RWPE1 (cell line): ENCODE measurements at regions of chr19 and their contacts with region 1.

Region 1: GRCh38 chr19:53182202-53182905 is 10.8 kb downstream of the ZNF665 start:
- DNase-seq: no peak
- H3K27ac ChIP-seq: no peak overlapping the region
- CTCF ChIP-seq: no peak

Region 2: DNA sequence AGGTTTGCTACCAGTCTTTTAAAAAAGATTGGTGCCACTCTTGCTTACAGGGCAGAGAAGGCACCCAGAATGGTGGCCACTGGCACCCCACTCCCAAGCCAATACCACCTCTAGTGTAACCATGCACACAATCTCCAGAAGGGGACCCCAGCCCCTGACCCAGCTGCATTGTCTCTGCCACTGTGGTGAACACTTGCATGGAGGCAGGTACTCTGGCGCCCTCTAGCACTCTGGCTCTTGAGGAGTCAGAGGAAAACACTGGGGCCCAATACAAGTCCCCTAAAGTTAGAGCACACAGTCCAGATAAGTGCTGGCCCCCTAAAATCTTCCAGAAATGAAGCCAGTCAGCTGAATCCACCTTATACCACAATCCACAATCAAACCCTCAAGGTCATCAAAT is 162.7 kb before region 1 on chr19:
- CTCF ChIA-PET with region 1: no interaction called
- POLR2A ChIA-PET with region 1: no interaction called
- DNase-seq: no peak
- H3K27ac ChIP-seq: no peak overlapping the region
- CTCF ChIP-seq: no peak

Region 3: DNA sequence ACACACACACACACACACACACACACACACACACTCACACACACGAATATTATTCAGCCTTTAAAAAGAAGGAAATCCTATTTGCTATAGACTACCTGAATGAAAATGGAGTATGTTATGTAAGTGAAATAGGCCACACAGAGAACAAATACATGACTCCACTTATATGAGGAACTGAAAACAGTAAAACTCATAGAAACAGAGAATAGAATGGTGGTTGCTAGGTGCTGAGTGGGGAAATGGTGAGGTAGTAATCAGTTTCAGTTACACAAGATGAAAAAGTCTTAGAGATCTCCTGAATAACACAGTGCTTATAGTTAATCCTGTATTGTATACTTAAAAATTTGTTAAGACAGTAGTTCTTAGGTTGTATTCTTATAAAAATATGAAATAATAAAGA is 64.1 kb after region 1 on chr19:
- CTCF ChIA-PET with region 1: no interaction called
- POLR2A ChIA-PET with region 1: no interaction called
- DNase-seq: no peak
- H3K27ac ChIP-seq: no peak overlapping the region
- CTCF ChIP-seq: no peak

Region 4: DNA sequence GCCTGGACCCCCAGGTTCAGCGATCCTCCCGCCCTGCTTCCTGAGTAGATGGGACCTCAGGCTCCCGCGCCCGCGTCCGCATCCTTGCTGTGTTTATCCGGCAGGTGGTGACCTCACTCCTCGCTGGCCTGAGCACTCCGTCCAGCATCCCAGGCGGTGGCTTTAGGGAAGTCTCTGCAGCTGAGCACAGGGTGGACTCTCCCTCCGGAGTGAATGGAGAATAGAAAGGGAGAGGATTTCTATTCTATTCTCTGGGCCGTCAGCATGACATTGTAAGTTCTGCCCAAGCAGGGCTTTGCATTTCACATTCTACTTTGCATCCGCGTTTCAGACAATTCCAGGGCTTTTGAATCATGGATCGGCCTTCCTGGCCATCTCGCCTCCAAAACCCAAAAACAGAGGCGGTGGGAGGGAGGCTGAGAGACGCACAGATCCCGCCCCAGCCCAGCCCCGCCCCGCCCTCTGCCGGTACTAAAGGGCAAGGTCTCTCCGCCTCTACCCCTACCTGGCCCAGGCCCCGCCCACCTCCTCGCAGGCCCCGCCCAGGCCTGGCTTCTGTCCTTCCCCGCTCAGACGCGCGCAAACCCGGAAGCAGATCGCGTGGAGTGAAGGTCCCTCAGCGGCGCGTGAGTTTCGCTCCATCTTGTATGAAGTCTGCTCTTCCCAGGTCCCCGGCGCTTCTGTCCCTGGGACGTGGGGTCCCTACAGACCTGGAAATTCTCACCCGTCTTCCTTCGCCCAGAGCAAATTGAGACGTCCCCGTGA is 183.0 kb after region 1 on chr19 and contains the start of gene ZNF525:
- CTCF ChIA-PET with region 1: interaction called, 10 read pairs
- POLR2A ChIA-PET with region 1: no interaction called
- DNase-seq: peak; percentile 91
- H3K27ac ChIP-seq: peak within 1 kb of the TSS; percentile 72
- CTCF ChIP-seq: no peak